Endothelial cell of umbilical vein (primary cell): ENCODE measurements at regions of chr3 and their contacts with region 1.

Region 1: DNA sequence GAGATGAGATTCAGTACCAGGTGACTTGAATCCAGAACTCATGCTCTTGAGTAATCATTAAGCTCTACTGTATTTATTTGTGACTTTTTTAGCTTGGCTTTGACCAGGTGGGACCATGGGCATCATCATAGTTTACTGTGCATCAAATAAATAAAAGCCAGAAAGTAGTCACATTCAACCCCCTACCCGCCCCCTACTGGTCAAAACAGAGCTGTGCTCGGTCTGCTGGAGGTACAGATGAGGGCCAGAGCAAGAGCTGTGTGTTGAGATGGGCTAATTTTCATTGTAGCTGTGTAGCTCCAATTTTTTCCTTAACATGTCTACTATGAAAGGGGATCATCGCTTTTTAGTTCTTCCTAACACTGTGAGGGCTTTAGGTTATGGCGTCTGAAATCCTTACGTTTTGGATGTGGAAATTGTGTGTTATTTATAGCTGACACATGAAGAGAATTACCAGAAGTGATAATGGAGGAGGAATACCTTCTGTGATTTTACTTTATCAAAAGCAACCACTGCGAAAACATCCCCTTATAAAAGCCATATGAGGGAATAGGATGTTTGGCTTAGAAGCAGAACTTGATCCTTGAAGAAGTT is 375.1 kb downstream of the PTPRG start:
- DNase-seq: peak; percentile 39
- H3K4me3 ChIP-seq: no peak overlapping the region
- H3K27ac ChIP-seq: no peak overlapping the region
- H3K4me1 ChIP-seq: no peaks in the 10 kb centered on the region
- H3K27me3 ChIP-seq: no peaks in the 10 kb centered on the region
- CTCF ChIP-seq: peak; percentile 73 to 83
- POLR2A ChIP-seq: no peak

Region 2: GRCh38 chr3:61858056-61858455 is 78.4 kb before region 1 on chr3:
- CTCF ChIA-PET with region 1: interaction called, 30 read pairs
- POLR2A ChIA-PET with region 1: no interaction called
- dilution Hi-C with region 1: no loop called
- intact Hi-C with region 1: loop called (anchors 1 kb)
- DNase-seq: peak; percentile 57
- H3K4me3 ChIP-seq: no peak overlapping the region
- H3K27ac ChIP-seq: no peak overlapping the region
- H3K4me1 ChIP-seq: no peaks in the 10 kb centered on the region
- H3K27me3 ChIP-seq: no peaks in the 10 kb centered on the region
- CTCF ChIP-seq: peak; percentile 6 to 34
- POLR2A ChIP-seq: no peak

Region 3: GRCh38 chr3:61894988-61895935 is 41.2 kb before region 1 on chr3:
- CTCF ChIA-PET with region 1: interaction called, 12 read pairs
- POLR2A ChIA-PET with region 1: no interaction called
- dilution Hi-C with region 1: no loop called
- intact Hi-C with region 1: no loop called
- DNase-seq: peak; percentile 93
- H3K4me3 ChIP-seq: no peak overlapping the region
- H3K27ac ChIP-seq: no peak overlapping the region
- H3K4me1 ChIP-seq: peaks cover 11% of the 10 kb centered on the region
- H3K27me3 ChIP-seq: no peaks in the 10 kb centered on the region
- CTCF ChIP-seq: no peak
- POLR2A ChIP-seq: no peak

Region 4: DNA sequence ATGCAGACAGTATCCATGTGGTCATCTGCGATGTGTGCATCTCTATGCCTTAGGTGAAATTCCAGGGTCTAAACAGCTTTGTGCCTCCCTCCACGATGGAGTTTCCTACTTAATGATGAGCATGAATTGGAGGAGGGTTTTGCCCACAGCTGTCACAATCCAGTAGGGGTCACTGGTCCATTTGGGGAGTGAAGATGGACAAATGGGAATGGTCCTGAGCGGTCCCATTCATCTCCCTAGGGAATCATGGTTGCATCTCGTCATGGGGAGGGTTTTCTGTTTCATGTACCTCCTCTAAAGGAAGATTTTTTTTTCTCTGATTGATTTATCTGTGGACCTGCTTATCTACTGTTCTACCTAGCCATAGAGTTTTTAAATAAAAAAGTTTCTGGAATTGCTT is 17.0 kb before region 1 on chr3:
- CTCF ChIA-PET with region 1: interaction called, 22 read pairs
- POLR2A ChIA-PET with region 1: no interaction called
- dilution Hi-C with region 1: no loop called
- intact Hi-C with region 1: no loop called
- DNase-seq: no peak
- H3K4me3 ChIP-seq: no peak overlapping the region
- H3K27ac ChIP-seq: no peak overlapping the region
- H3K4me1 ChIP-seq: peaks cover 6% of the 10 kb centered on the region
- H3K27me3 ChIP-seq: no peaks in the 10 kb centered on the region
- CTCF ChIP-seq: no peak
- POLR2A ChIP-seq: no peak

Region 5: GRCh38 chr3:61947456-61947855 is 11.0 kb after region 1 on chr3:
- CTCF ChIA-PET with region 1: interaction called, 36 read pairs
- POLR2A ChIA-PET with region 1: no interaction called
- dilution Hi-C with region 1: no loop called
- intact Hi-C with region 1: no loop called
- DNase-seq: no peak
- H3K4me3 ChIP-seq: no peak overlapping the region
- H3K27ac ChIP-seq: no peak overlapping the region
- H3K4me1 ChIP-seq: no peaks in the 10 kb centered on the region
- H3K27me3 ChIP-seq: no peaks in the 10 kb centered on the region
- CTCF ChIP-seq: no peak
- POLR2A ChIP-seq: no peak

Region 6: DNA sequence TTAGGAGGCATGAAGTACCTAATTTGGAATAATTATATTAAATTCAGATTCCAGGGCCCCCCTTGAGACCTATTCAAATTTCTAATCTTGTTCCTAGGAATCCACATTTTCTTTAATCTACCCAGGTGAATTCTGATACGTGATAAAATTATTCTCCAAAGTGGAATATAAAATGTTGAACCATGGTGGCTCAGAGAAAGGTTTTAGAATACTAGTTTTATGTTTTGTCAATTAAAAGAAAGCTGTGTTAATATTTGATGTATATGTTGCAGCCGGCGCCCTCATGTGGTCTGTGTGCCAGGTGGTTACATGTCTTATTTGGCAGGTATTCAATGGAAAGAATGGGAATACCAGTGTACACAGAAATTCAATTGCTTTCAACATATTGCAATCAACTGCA is 115.1 kb after region 1 on chr3:
- CTCF ChIA-PET with region 1: interaction called, 18 read pairs
- POLR2A ChIA-PET with region 1: no interaction called
- dilution Hi-C with region 1: no loop called
- intact Hi-C with region 1: loop called (anchors 2 kb)
- DNase-seq: peak; percentile 61
- H3K4me3 ChIP-seq: no peak overlapping the region
- H3K27ac ChIP-seq: no peak overlapping the region
- H3K4me1 ChIP-seq: no peaks in the 10 kb centered on the region
- H3K27me3 ChIP-seq: no peaks in the 10 kb centered on the region
- CTCF ChIP-seq: peak; percentile 44 to 45
- POLR2A ChIP-seq: no peak

Region 7: DNA sequence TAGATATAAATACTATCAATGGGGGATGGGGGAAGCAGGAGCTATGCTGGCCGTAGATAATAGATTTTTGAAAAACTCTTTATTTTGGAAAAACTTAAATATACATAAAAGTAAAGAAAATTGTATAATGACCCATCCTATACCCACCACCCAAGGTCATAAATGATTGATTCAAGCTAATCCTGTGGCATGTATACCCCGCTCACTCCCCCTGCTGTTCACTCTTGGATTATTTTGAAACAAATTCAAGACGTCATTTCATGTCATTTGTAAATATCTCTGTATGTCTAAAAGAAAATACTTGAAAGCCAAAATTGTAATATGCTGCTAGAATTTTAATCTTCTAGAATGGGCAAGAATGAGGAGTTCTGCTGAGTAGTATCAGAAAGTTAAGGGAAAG is 195.2 kb after region 1 on chr3:
- CTCF ChIA-PET with region 1: interaction called, 8 read pairs
- POLR2A ChIA-PET with region 1: no interaction called
- dilution Hi-C with region 1: no loop called
- intact Hi-C with region 1: loop called (anchors 5 kb)
- DNase-seq: peak; percentile 47
- H3K4me3 ChIP-seq: no peak overlapping the region
- H3K27ac ChIP-seq: no peak overlapping the region
- H3K4me1 ChIP-seq: peaks cover 11% of the 10 kb centered on the region
- H3K27me3 ChIP-seq: no peaks in the 10 kb centered on the region
- CTCF ChIP-seq: peak; percentile 17 to 37
- POLR2A ChIP-seq: no peak